Cardiac septum (tissue), 1 donor: ENCODE measurements at regions of chr7 and their contacts with region 1.

Region 1: DNA sequence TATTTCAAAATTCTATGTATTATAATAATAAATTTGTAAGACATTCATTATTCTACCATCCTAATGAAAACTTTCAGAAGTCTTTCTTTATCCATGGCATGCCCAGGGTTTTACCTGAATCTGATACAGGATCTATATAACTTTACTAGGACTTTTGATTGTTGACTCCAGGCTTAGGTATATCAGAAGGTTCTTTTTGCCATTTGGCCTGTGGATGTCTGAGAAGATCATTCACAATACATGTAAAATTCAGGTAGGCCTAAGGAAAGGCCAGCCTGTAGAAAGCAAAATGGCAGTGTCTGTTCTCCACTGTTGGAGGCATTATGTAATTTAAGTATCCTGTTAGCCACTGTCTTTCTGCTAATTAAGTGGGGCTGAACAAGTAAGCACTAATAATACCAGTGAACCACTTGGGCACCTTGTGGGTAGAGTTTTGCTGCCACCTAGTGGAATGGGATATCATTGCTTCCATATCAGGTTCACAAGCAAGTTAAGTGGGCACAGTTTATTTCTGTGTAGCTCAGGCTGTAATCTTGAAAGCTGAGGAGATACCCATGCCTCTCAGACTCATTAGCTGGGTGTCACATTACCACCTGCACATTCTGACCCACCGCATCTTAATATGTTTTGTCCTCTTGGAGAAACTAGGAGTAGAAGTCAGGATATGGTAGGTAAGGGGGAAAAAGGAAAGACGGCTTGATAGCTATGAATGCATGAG is 105.5 kb downstream of the SEPTIN7 start:
- DNase-seq: no peak

Region 2: GRCh38 chr7:35707422-35707821 is 198.9 kb before region 1 on chr7:
- intact Hi-C with region 1: loop called (anchors 1 kb)
- DNase-seq: no peak